Heart right ventricle (tissue), 16 donors: ENCODE measurements at regions of chr2 and their contacts with region 1.

Region 1: DNA sequence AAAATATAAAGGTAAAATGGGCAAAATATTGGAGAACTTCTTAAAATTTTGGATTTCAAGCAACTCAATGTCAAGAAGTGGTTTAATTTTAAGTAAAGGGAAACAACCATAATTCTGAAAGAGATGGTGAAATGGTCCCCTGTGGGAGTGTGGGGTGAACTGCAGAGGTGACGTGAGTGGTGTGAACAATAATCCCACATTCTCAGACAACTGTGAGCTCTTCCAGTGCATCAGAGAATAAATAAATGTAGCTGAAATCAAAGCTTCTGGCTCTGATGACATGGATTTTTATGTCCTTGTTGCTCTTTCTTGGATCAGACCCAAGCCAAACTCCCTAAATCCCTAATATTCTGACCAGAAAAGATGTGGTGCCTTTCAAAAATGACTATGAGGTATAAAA is 672.7 kb downstream of the ZEB2 start:
- DNase-seq: no peak
- ATAC-seq: peak in 1 of 8 donors; percentile 49
- H3K4me3 ChIP-seq: no peak overlapping the region
- H3K27ac ChIP-seq: no peak overlapping the region
- H3K4me1 ChIP-seq: peaks cover 0 to 5% (median 0%) of the 10 kb centered on the region in 9 donors
- H3K27me3 ChIP-seq: no peaks in the 10 kb centered on the region
- CTCF ChIP-seq: no peak

Region 2: DNA sequence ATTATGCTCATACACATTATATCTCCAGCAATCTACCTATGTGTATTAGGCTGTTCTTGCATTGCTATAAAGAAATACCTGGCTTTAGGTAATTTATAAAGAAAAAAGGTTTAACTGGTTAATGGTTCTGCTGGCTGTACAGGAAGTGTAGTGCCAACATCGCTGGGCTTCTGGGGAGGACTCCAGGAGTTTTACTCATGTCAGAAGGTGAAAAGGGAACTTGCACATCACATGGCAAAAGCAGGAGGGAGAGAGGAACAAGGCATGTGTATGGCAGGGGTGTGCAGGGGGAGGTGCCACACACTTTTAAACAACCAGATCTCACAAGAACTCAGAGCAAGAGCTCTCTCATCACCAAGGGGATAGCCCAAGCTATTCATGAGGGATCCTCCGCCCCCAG is 1388.1 kb after region 1 on chr2:
- intact Hi-C with region 1: loop called in 1 of 10 experiments (anchors 5 kb)
- DNase-seq: no peak
- ATAC-seq: no peak
- H3K4me3 ChIP-seq: no peak overlapping the region
- H3K27ac ChIP-seq: no peak overlapping the region
- H3K4me1 ChIP-seq: no peaks in the 10 kb centered on the region
- H3K27me3 ChIP-seq: no peaks in the 10 kb centered on the region
- CTCF ChIP-seq: no peak